AG04450 (cell line): ENCODE measurements at regions of chr20 and their contacts with region 1.

Region 1: DNA sequence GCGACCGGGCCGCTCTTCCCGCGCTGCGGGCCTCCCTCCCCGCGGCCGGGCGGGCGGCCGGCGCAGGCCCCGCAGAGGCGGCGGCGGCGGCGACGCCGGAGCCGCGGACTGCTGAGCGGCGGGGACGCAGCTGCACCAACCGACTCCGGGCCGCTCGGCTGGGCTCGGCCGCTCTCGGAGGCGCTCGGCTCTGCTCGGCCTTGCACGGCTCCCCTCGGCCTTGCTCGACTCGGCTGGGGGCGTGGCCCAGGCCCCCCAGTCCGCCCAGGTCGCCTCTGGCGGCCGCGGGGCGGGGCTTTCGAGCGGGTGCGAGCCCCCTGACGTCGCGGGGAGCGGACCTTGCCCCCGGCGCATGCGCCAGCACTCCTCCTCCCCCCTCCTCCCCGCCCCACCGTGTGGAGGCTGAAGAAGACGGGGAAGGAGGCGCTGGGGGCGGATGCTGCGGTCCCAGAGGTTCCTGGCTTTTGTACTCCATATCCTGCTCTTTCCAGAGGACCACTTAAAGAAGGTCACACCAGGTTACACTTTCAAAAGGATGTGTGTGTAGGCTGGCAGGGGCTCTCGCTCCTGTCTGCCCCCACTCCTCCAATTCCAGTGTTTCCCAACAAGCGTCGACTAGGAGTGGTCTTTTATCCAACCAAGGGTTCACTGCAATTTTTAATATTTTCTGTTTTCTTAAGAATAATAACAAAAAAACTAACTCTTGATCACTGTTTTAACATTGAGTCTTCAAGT is at the start of gene ZHX3:
- DNase-seq: peak; percentile 90
- H3K4me3 ChIP-seq: peak within 1 kb of the TSS; percentile 90
- H3K27ac ChIP-seq: peak within 1 kb of the TSS; percentile 99
- H3K27me3 ChIP-seq: no peaks in the 10 kb centered on the region
- CTCF ChIP-seq: no peak
- polyA plus RNA-seq, gene ZHX3: 24.1 and 29.5 TPM in 2 replicates

Region 2: GRCh38 chr20:41329435-41330342 is 12.0 kb after region 1 on chr20:
- CTCF ChIA-PET with region 1: no interaction called
- POLR2A ChIA-PET with region 1: interaction called, 22 read pairs
- DNase-seq: peak; percentile 90
- H3K4me3 ChIP-seq: no peak overlapping the region
- H3K27ac ChIP-seq: peak overlapping the region; percentile 99
- H3K27me3 ChIP-seq: no peaks in the 10 kb centered on the region
- CTCF ChIP-seq: no peak